Esophagus squamous epithelium (tissue), 5 donors: ENCODE measurements at regions of chr2 and their contacts with region 1.

Region 1: DNA sequence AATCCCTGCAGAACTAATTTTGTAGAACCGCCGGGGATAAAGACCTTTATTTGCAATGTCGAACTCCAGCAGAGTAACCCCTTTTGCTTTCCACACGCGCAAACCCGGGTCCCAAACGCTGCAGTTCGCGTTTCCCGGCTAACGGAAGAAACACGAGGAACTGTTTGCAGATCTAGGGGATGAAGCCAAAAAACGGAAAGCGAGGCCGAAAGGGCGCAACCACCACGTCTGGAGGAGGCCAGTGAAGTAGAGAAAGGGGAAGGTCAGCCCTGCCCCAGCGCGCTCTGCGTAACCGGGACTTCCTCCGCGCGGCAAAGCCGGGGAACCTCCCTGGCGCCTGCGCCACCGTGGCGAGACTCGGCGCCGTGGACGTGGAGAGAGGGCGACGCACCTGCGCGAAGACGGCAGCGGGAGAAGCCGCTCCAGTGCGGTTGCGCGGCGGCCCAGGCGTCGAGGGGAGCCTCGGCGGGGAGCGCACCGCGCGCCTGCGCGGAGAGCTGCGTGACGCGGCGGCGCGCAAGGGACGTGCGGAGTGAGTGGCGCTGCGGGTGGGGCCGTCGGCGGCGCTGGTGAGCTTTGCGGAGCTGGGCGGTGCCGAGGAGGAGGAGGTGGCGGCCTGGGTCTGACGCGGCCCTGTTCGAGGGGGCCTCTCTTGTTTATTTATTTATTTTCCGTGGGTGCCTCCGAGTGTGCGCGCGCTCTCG is at the start of gene PPP1CB:
- DNase-seq: peak; percentile 95
- H3K4me3 ChIP-seq: peak within 1 kb of the TSS; percentile 77 to 97 (median 96)
- H3K27ac ChIP-seq: peak within 1 kb of the TSS; percentile 98 to 100 (median 100)
- H3K4me1 ChIP-seq: peaks cover 9 to 48% (median 21%) of the 10 kb centered on the region in 3 donors
- H3K27me3 ChIP-seq: no peaks in the 10 kb centered on the region
- CTCF ChIP-seq: peak in 5 of 6 experiments; percentile 16 to 59 (median 37)
- POLR2A ChIP-seq: peak in 3 of 4 donors; percentile 81 to 95 (median 90)
- total RNA-seq, gene PPP1CB: 141 to 315 (median 195) TPM

Region 2: DNA sequence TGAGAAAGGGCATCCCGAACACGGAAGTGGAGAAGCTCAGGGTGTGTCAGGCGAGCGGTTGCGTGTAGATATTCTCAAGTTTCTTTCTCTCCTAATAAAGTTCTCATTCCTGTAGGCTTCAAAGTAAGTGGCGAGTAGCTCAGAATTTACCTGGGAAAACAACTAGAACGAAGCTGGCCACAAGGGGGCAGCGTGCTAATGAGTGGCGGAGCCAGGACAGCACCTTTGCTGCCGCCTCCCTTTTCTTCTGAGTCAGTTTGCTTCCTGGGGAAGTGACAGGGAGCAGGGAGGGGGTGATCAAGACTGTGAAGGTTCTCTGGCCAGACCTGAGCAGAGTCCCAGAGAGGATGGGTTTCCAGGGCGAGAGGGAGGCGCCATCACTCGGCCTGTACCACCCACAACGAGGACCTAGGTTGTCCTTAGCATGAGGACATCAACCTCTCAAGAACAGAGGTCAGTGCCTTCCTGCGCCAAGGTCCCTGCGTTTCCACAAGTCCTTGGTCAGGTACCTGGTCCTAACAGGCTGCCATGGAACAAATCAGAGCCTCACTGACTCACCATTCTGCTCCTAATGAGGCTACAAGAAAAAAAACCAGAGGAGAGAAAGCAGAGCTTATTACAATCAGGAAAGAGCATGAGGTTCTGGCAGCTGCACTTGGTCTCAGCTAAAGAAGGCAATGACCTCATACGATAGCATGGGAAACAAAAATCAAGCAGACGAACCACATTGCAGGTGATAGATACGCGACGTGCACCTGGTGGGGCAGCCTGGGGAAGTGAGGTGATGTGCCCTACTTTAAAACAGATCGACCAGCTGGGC is 156.9 kb before region 1 on chr2:
- intact Hi-C with region 1: loop called (anchors 5 kb)
- DNase-seq: peak; percentile 29
- H3K4me3 ChIP-seq: peak overlapping the region in 1 of 4 donors; percentile 41
- H3K27ac ChIP-seq: peak overlapping the region; percentile 76 to 89 (median 86)
- H3K4me1 ChIP-seq: peaks cover 10 to 27% (median 18%) of the 10 kb centered on the region in 3 donors
- H3K27me3 ChIP-seq: no peaks in the 10 kb centered on the region
- CTCF ChIP-seq: peak; percentile 83 to 95 (median 90)
- POLR2A ChIP-seq: peak in 1 of 4 donors; percentile 38

Region 3: DNA sequence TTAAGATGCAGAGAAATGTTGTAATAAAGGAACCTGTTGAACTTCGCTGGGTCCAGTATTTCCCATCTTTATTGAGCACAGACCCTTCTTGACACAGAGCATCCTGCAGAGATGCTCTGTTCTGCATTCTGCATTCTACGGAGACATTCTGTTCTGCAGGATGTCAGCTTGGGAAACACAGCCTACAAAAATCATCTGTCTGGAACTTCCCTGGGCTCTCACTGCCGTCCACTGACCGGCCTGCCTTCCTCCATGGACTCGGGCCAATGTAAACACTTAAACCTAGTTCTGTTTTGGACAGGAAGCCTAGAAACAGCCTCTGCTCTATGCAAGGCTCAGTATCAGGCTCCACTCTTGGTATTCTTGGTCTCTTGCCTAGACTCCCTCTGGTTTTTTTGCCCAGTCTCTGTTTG is 89.8 kb before region 1 on chr2:
- intact Hi-C with region 1: loop called (anchors 10 kb)
- DNase-seq: no peak
- H3K4me3 ChIP-seq: no peak overlapping the region
- H3K27ac ChIP-seq: peak overlapping the region; percentile 80 to 92 (median 92)
- H3K4me1 ChIP-seq: peaks cover 39 to 99% (median 61%) of the 10 kb centered on the region in 3 donors
- H3K27me3 ChIP-seq: no peaks in the 10 kb centered on the region
- CTCF ChIP-seq: no peak
- POLR2A ChIP-seq: no peak

Region 4: DNA sequence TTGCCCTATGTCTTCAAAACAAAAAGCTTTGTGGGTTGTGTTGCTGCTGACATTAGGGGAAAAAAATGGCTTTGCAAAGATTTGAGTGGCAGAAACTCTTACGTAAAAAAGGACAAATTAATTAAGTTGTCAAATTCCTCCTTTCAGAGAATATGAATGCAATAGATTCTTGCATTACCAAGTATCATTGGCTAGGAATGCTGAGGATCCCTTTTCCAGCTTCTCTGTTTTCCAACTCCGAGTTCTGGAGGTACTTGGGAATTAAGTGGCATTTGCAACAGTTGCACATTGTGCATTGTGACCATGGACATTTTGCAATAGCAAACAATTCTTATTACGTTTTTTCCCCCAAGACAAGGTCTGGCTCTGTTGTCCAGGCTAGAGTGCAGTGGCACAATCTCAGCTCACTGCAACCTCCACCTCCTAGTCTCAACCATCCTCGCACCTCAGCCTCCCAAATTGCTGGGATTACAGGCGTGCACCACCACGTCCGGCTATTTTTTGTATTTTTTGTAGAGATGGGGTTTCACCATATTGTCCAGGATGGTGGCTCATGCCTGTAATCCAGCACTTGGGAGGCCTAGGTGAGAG is 29.7 kb before region 1 on chr2:
- intact Hi-C with region 1: loop called (anchors 2 kb)
- DNase-seq: no peak
- H3K4me3 ChIP-seq: no peak overlapping the region
- H3K27ac ChIP-seq: no peak overlapping the region
- H3K4me1 ChIP-seq: peaks cover 8 to 40% (median 15%) of the 10 kb centered on the region in 3 donors
- H3K27me3 ChIP-seq: no peaks in the 10 kb centered on the region
- CTCF ChIP-seq: no peak
- POLR2A ChIP-seq: no peak

Region 5: DNA sequence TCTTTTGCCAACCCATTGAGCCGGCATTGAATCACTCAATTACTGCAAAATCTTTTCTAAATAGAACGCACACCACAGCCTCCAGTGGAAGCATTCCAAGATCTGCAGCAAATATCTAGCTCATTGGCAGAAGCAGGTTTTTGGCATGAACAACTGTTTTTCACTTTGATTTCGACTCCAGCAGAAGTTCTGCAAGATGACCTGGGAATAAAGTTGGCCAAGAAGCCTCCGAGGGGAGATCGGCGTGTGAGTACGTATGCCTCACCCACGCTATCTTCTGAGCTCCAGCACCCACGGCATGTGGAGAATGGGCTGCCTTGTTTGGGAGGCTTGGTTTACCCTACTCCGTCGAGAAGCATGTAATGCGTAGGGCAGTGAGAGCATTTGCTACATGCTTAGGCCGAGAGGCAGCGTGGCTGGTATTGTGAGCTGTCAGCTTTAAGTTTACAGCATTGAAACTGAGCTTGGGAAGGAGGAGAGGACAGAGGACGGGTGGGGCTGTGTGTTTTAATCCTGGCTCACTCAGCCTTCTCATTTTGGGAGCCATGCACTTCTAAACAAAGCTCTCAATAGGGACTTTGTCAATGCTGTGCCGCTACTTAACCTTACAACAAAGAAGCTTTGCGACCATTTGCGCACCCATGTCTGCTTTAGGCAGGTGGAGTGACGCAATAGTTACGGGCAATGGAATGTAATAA is 312.4 kb after region 1 on chr2:
- intact Hi-C with region 1: no loop called
- DNase-seq: no peak
- H3K4me3 ChIP-seq: peak overlapping the region in 3 of 4 donors; percentile 28 to 42 (median 31)
- H3K27ac ChIP-seq: peak overlapping the region; percentile 92 to 95 (median 94)
- H3K4me1 ChIP-seq: peaks cover 49 to 82% (median 56%) of the 10 kb centered on the region in 3 donors
- H3K27me3 ChIP-seq: no peaks in the 10 kb centered on the region
- CTCF ChIP-seq: no peak
- POLR2A ChIP-seq: no peak